ENCODE measurements at regions of chrX and their contacts with region 1.

Region 1: GRCh38 chrX:15686818-15687685 is 22.4 kb upstream of the CLTRN start:
- DNase-seq: no peak
- H3K4me3 ChIP-seq: no peak overlapping the region
- H3K27ac ChIP-seq: no peak overlapping the region
- H3K4me1 ChIP-seq: peaks cover 0 to 5% (median 0%) of the 10 kb centered on the region in 4 donors
- H3K27me3 ChIP-seq: no peaks in the 10 kb centered on the region
- CTCF ChIP-seq: peak; percentile 63 to 69 (median 68)
- EP300 ChIP-seq: no peak
- POLR2A ChIP-seq: no peak

Region 2: DNA sequence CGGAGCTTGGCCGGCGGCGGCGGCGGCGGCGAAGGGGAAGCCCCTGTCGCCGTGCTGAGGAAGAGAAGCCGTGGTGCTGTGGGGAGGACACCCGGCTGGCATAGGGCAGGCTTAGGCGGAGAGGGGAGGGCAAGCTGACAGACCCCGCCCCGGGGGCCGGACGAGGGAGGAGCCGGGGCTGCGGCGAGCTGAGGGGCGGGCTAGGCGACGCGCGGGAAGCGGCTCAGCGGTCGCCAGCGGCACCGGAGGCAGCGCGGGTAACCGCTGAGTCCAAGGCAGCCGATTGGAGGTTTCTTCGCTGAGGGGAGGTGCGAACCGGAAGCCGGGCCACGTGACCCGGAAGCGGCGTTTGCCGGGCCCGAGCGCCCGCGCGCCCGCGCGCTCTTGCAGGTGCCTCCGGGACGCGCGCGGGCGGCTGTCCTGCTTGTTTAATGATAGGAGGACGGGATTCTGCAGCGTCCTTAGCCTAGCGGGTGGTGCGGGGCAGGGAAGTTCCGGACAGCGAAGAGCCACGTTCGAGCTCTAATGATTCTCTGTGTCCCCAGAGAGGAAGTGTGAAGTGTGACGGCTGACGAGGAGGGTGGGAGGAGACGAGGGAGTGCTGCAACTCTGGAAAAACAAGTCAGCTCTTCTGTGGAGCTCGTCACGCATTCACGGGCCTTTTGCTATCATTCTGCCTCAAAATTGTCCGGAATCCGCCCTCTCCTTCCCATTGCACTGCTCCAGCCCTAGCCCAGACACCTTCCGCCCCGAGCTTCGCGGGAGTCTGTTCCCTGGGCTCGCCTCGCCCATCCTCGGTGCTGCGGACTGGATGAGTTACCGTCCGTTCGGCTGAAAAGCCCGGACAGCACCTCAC is 167.9 kb after region 1 on chrX and contains the start of gene AP1S2:
- intact Hi-C with region 1: loop called (anchors 10 kb)
- DNase-seq: peak; percentile 94
- H3K4me3 ChIP-seq: peak within 1 kb of the TSS; percentile 75 to 93 (median 80)
- H3K27ac ChIP-seq: peak within 1 kb of the TSS; percentile 88 to 96 (median 95)
- H3K4me1 ChIP-seq: peaks cover 12 to 41% (median 28%) of the 10 kb centered on the region in 4 donors
- H3K27me3 ChIP-seq: no peaks in the 10 kb centered on the region
- CTCF ChIP-seq: no peak
- EP300 ChIP-seq: no peak
- POLR2A ChIP-seq: peak; percentile 55
- total RNA-seq, gene AP1S2: 136 to 142 (median 140) TPM

Region 3: GRCh38 chrX:15973299-15973698 is 286.2 kb after region 1 on chrX:
- intact Hi-C with region 1: loop called (anchors 10 kb)
- DNase-seq: no peak
- H3K4me3 ChIP-seq: no peak overlapping the region
- H3K27ac ChIP-seq: no peak overlapping the region
- H3K4me1 ChIP-seq: no peaks in the 10 kb centered on the region
- H3K27me3 ChIP-seq: no peaks in the 10 kb centered on the region
- CTCF ChIP-seq: peak; percentile 24 to 41 (median 41)
- EP300 ChIP-seq: no peak
- POLR2A ChIP-seq: no peak

Region 4: GRCh38 chrX:16445166-16445752 is 758.2 kb after region 1 on chrX:
- intact Hi-C with region 1: loop called (anchors 10 kb)
- DNase-seq: no peak
- H3K4me3 ChIP-seq: no peak overlapping the region
- H3K27ac ChIP-seq: no peak overlapping the region
- H3K4me1 ChIP-seq: no peaks in the 10 kb centered on the region
- H3K27me3 ChIP-seq: no peaks in the 10 kb centered on the region
- CTCF ChIP-seq: peak; percentile 48 to 65 (median 59)
- EP300 ChIP-seq: no peak
- POLR2A ChIP-seq: no peak